A549 (cell line): ENCODE measurements at regions of chr20 and their contacts with region 1.

Region 1: DNA sequence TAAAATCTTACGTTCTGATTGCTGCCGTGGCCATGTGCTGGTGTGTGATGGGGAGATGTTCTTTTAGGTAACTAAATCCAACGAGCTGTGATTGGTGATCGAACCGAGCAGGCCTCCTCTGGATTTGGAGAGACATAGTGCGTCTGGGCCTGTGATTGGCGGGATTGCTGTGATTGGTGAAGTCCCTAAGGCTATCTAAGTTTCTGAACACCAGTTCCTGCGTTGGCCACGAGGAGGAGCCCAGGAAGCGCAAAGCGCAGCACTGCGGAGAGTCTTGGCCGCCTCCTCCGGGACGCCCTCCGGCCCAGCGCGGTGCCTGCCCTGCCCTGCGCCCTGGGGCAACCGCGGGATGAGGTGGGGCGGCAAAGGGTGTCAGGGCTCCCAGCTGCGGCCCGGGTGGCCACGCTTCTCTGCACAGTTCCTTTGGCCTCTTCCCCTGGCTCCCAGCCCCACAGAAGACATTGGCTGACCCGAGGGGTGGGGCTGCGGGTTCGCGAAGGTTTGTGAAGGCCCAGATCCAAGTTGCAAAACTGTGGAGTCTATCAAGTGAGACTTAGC is 33.0 kb downstream of the HNF4A start:
- DNase-seq: peak; percentile 69 to 84
- ATAC-seq: peak; percentile 77 to 87
- H3K4me3 ChIP-seq: no peak overlapping the region
- H3K27ac ChIP-seq: peak overlapping the region; percentile 55 to 73
- H3K4me1 ChIP-seq: peaks cover 64% of the 10 kb centered on the region
- CTCF ChIP-seq: peak; percentile 93
- EP300 ChIP-seq: no peak
- POLR2A ChIP-seq: no peak
- RAD21 ChIP-seq: peak; percentile 91 to 95

Region 2: GRCh38 chr20:44222633-44223368 is 165.7 kb before region 1 on chr20:
- CTCF ChIA-PET with region 1: interaction called, 241 read pairs
- POLR2A ChIA-PET with region 1: interaction called, 4 read pairs
- DNase-seq: peak in 1 of 2 experiments; percentile 21
- ATAC-seq: peak in 1 of 2 experiments; percentile 36; a peak in 2 of 6 replicates
- H3K4me3 ChIP-seq: no peak overlapping the region
- H3K27ac ChIP-seq: no peak overlapping the region
- H3K4me1 ChIP-seq: no peaks in the 10 kb centered on the region; the same call in 2 of the 3 replicates
- CTCF ChIP-seq: no peak
- EP300 ChIP-seq: no peak
- POLR2A ChIP-seq: no peak
- RAD21 ChIP-seq: no peak

Region 3: DNA sequence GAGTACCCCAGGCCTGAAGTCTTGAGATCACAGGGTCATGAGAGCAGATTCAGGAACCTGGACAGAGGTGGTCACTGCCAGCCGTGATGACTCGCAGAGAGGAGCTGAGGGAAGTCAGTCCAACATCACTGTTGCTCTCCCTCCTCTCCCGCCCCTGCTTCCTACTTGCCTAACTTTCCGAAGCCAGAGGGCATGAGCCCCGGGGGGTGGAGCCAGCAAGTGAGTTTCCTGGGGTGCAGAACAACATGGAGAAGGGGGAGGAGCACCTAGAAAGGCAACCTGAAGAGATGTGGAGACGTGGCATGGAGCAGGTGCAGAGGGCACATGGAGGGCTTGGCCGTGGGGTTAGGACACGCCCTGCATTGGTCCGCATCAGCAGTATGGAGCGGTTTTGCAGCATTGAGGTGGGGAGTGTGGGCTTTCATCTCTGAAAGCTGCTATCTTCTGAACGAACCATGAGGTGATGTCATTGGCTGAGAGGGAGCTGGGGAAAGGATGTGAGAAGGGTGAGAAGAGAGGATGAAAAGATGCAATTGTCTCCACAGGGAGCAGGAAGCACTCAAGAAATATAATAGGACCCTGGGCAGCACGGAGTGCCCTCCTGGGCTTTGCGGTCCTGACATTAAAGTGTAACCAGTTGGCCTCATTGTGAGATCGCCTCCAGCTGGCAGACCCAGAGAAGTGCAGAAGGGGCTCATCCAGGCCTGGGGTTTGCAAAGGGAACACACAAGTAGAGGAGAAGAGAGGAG is 116.5 kb before region 1 on chr20:
- CTCF ChIA-PET with region 1: no interaction called
- POLR2A ChIA-PET with region 1: no interaction called
- DNase-seq: no peak
- ATAC-seq: peak in 1 of 2 experiments; percentile 36; a peak in 1 of 6 replicates
- H3K4me3 ChIP-seq: no peak overlapping the region
- H3K27ac ChIP-seq: no peak overlapping the region
- H3K4me1 ChIP-seq: no peaks in the 10 kb centered on the region
- CTCF ChIP-seq: 0 out of 3 replicates have a peak, but pooled peaks have one; percentile 12
- EP300 ChIP-seq: no peak
- POLR2A ChIP-seq: no peak
- RAD21 ChIP-seq: no peak

Region 4: DNA sequence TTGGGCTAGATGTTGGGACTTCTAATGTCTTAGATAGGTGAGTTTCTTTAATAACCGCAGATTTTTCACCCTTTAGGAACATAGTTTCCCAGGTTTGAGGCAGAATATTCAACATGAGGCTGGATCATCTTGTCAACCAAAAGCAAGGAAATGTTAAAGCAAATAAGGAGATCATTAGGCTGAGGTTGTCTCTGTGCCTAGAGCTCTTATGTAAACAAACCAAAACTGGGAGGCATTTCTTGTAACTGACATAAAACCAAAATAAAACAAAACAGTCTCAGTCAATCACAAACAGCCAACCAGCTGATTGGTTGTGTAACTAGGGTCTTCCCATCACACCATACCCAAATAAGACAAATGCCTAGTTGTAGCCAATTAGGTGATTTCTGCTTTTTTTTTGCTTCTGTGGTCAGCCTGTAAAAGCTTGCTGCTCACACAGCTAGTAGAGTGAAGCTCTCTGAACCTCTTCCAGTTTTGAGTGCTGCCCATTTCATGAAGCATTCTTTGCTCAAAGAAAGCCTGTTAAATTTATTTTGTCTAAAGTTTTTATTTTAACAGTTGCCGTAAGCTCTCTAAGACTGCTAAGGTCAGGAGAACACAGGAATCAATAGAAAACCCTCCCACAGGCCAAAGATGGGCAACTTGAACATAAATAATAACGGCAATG is 68.7 kb before region 1 on chr20:
- CTCF ChIA-PET with region 1: interaction called, 69 read pairs
- POLR2A ChIA-PET with region 1: no interaction called
- DNase-seq: peak in 1 of 2 experiments; percentile 34
- ATAC-seq: no peak
- H3K4me3 ChIP-seq: no peak overlapping the region
- H3K27ac ChIP-seq: no peak overlapping the region
- H3K4me1 ChIP-seq: peaks cover 12% of the 10 kb centered on the region
- CTCF ChIP-seq: no peak
- EP300 ChIP-seq: no peak
- POLR2A ChIP-seq: no peak
- RAD21 ChIP-seq: no peak

Region 5: GRCh38 chr20:44364780-44365179 is 23.8 kb before region 1 on chr20:
- CTCF ChIA-PET with region 1: interaction called, 81 read pairs
- POLR2A ChIA-PET with region 1: no interaction called
- DNase-seq: no peak
- ATAC-seq: no peak
- H3K4me3 ChIP-seq: no peak overlapping the region
- H3K27ac ChIP-seq: peak overlapping the region in 1 of 2 experiments; percentile 10; a peak in 1 of 6 replicates
- H3K4me1 ChIP-seq: peaks cover 45% of the 10 kb centered on the region
- CTCF ChIP-seq: no peak
- EP300 ChIP-seq: no peak
- POLR2A ChIP-seq: no peak
- RAD21 ChIP-seq: no peak

Region 6: DNA sequence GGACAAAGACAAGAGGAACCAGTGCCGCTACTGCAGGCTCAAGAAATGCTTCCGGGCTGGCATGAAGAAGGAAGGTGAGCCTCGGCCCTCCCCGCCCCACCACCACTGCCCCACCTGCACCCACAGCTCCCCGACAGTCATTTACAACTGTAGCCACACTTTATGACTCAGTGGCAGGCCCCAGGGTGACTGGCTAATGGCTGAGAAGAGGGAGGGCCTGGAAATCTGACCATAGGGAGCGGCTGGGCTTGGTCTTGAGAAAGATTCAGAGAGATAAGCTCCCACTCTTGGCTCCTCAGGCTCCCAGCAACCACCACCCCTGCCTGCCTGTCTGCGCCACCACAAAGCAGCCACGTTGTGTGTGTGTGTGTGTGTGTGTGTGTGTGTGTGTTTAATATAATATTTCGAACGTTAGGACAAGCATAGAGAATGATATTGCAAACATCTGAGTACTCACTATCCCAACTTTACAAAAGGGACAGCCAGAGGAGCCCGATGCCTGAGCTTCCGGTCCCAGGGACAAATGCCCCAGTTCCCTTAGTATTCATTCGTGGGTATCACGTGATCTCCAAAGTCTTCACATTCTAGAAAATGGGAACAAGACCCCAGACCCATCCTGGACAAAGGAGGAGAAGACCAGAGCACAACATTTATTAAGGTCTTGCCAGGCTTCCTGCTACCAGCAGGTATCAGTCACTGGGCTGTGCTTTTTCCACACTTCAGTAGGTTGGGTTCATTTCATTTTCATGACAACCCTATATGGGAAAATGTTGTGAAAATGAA is 19.0 kb after region 1 on chr20:
- CTCF ChIA-PET with region 1: interaction called, 17 read pairs
- POLR2A ChIA-PET with region 1: no interaction called
- DNase-seq: peak; percentile 66 to 80
- ATAC-seq: peak; percentile 62 to 81
- H3K4me3 ChIP-seq: no peak overlapping the region
- H3K27ac ChIP-seq: peak overlapping the region; percentile 48 to 76; a peak in 5 of 6 replicates
- H3K4me1 ChIP-seq: peaks cover 31% of the 10 kb centered on the region
- CTCF ChIP-seq: no peak
- EP300 ChIP-seq: no peak
- POLR2A ChIP-seq: no peak
- RAD21 ChIP-seq: no peak

Region 7: GRCh38 chr20:44467289-44467883 is 78.8 kb after region 1 on chr20:
- CTCF ChIA-PET with region 1: interaction called, 43 read pairs
- POLR2A ChIA-PET with region 1: no interaction called
- DNase-seq: no peak
- ATAC-seq: no peak; a peak in 1 of 6 replicates
- H3K4me3 ChIP-seq: no peak overlapping the region
- H3K27ac ChIP-seq: peak overlapping the region in 1 of 2 experiments; percentile 65; a peak in 1 of 6 replicates
- H3K4me1 ChIP-seq: peaks cover 9% of the 10 kb centered on the region; the same call in 1 of the 3 replicates
- CTCF ChIP-seq: no peak
- EP300 ChIP-seq: no peak
- POLR2A ChIP-seq: no peak
- RAD21 ChIP-seq: no peak

Region 8: DNA sequence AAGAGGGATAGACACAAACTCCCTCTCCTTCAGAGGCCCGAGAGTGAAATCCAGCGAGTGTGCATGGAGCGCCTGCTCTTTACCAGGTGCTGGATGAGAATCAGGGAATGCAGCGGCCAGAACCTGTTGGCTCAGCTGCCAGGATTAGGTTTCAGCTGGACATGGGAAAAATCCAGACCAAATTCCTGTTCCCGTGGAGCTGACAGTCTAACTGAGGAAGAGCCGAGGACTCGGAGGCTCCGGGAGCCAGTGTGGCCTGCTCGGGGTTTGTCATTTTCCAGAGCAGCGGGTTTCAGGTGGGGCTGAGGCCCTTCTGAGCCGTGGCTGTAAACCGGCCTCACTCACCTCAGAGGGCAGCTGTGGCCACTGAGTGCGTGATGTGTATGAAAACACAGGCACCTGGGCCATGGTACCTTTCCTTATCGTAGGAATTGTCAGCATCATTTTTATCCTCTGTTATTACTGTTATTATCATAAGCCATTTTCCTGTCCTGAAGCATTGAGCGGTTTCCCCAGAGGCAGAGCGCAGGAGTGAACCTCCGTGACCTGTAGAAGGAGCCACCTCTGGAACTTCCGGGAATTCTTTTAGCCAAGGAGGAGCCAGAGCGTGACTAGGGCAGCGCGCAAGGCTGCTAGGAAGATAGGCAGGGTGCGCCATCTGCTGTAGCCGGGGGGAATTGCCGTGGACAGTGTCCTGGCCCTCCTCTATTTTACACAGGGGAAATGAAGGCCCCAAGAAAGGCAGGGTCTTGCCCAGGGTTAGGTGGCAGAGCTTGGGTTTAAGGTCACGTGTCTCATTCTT is 221.2 kb after region 1 on chr20:
- CTCF ChIA-PET with region 1: interaction called, 19 read pairs
- POLR2A ChIA-PET with region 1: no interaction called
- DNase-seq: peak; percentile 91 to 95
- ATAC-seq: peak; percentile 98 to 99
- H3K4me3 ChIP-seq: peak overlapping the region; percentile 29; the same call in 1 of the 3 replicates
- H3K27ac ChIP-seq: peak overlapping the region; percentile 76 to 85
- H3K4me1 ChIP-seq: peaks cover 11% of the 10 kb centered on the region
- CTCF ChIP-seq: peak; percentile 89
- EP300 ChIP-seq: no peak
- POLR2A ChIP-seq: peak; percentile 39; the same call in 1 of the 2 replicates
- RAD21 ChIP-seq: peak; percentile 96 to 98